ENCODE measurements at regions of chr19 and their contacts with region 1.

Region 1: GRCh38 chr19:1249298-1249989 is 1.1 kb downstream of the MIDN start:
- DNase-seq: peak; percentile 89
- H3K4me3 ChIP-seq: peak overlapping the region; percentile 86
- H3K27ac ChIP-seq: peak overlapping the region; percentile 78
- H3K27me3 ChIP-seq: no peaks in the 10 kb centered on the region
- CTCF ChIP-seq: no peak

Region 2: DNA sequence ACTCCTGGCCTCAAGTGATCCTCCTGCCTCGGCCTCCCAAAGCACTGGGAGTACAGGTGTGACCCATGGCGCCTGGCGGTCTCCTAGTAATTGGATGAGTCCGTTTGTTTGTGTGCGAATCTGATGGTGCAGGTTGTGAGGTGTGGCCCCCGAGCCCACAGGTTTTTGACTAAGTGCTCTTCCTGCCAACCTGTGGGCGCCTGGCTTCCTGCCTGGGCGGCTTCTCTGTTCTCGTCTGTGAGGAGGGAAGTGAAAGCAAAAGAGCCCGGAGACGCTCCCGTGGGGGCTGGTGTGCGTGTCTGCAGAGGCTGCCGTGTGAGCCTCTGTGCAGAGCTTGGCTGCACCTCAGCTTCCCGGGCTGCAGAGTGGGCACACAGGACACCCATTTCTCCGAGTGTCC is 172.5 kb before region 1 on chr19:
- CTCF ChIA-PET with region 1: no interaction called
- POLR2A ChIA-PET with region 1: interaction called, 11 read pairs
- DNase-seq: no peak
- H3K4me3 ChIP-seq: no peak overlapping the region
- H3K27ac ChIP-seq: no peak overlapping the region
- H3K27me3 ChIP-seq: no peaks in the 10 kb centered on the region
- CTCF ChIP-seq: no peak

Region 3: GRCh38 chr19:1275260-1275975 is 26.0 kb after region 1 on chr19 and contains the start of gene FAM174C:
- CTCF ChIA-PET with region 1: interaction called, 12 read pairs
- POLR2A ChIA-PET with region 1: interaction called, 13 read pairs
- DNase-seq: peak; percentile 90
- H3K4me3 ChIP-seq: peak within 1 kb of the TSS; percentile 75
- H3K27ac ChIP-seq: peak within 1 kb of the TSS; percentile 91
- H3K27me3 ChIP-seq: no peaks in the 10 kb centered on the region
- CTCF ChIP-seq: no peak
- polyA plus RNA-seq, gene FAM174C: 16.6 and 29.1 TPM in 2 replicates

Region 4: GRCh38 chr19:1389033-1389940 is 139.8 kb after region 1 on chr19:
- CTCF ChIA-PET with region 1: no interaction called
- POLR2A ChIA-PET with region 1: no interaction called
- DNase-seq: no peak
- H3K4me3 ChIP-seq: no peak overlapping the region
- H3K27ac ChIP-seq: no peak overlapping the region
- H3K27me3 ChIP-seq: no peaks in the 10 kb centered on the region
- CTCF ChIP-seq: no peak